CD4-positive, alpha-beta memory T cell (primary cell): ENCODE measurements at regions of chr2 and their contacts with region 1.

Region 1: DNA sequence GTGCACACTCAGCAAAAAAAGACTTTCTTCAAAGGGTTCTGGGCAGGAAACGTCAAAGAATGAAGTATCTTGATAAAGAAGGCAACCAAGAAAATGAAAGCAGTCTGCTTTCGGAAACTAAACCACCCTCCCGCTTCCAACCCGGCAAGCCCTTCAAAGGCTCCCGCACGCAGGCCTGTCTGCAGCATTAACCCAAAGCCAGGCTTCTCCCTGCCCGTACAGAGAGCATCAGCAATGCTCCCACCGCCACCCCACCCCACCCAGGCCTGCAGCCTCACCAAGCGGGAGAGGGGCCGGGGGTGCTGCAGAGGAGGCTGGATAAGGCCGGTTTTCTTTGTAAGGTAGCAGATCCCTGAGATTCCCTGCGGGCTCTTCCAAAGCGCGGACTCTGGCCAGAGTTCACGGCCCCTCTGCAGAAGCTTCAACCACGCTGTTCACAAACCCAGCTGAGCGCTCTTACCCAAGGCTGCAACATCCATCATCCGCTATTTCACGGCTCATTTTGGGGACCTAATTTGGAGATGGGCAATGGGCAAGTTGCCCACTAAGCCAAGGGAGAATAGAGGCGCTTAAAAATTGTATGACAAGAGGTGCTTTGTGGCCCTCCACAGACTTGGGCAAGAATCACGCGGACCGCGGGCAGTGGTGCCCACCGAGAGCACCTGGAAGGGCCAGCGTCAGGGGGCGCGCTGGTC is 225.6 kb upstream of the ID2 start:
- DNase-seq: peak; percentile 65 to 80 (median 74)
- H3K4me3 ChIP-seq: peak overlapping the region; percentile 12 to 45
- H3K4me3 Mint-ChIP-seq: peak overlapping the region; percentile 82 to 95 (median 88)
- H3K27ac ChIP-seq: peak overlapping the region; percentile 61
- H3K27ac Mint-ChIP-seq: peak overlapping the region; percentile 94 to 98 (median 96)
- H3K4me1 ChIP-seq: peaks cover 37% of the 10 kb centered on the region
- H3K4me1 Mint-ChIP-seq: peaks cover 21 to 47% (median 32%) of the 10 kb centered on the region in 4 donors
- H3K27me3 ChIP-seq: no peaks in the 10 kb centered on the region
- H3K27me3 Mint-ChIP-seq: no peaks in the 10 kb centered on the region

Region 2: GRCh38 chr2:8472545-8473323 is 16.4 kb after region 1 on chr2:
- CTCF ChIA-PET with region 1: interaction called, 3 read pairs
- POLR2A ChIA-PET with region 1: interaction called, 21 read pairs
- intact Hi-C with region 1: loop called (anchors 1 kb)
- DNase-seq: peak in 1 of 5 donors; percentile 20
- H3K4me3 ChIP-seq: no peak overlapping the region
- H3K4me3 Mint-ChIP-seq: peak overlapping the region in 7 of 8 donors; percentile 59 to 75 (median 70)
- H3K27ac ChIP-seq: peak overlapping the region; percentile 38
- H3K27ac Mint-ChIP-seq: peak overlapping the region; percentile 80 to 98 (median 91)
- H3K4me1 ChIP-seq: peaks cover 81% of the 10 kb centered on the region
- H3K4me1 Mint-ChIP-seq: peaks cover 53 to 89% (median 78%) of the 10 kb centered on the region in 4 donors
- H3K27me3 ChIP-seq: no peaks in the 10 kb centered on the region
- H3K27me3 Mint-ChIP-seq: no peaks in the 10 kb centered on the region

Region 3: DNA sequence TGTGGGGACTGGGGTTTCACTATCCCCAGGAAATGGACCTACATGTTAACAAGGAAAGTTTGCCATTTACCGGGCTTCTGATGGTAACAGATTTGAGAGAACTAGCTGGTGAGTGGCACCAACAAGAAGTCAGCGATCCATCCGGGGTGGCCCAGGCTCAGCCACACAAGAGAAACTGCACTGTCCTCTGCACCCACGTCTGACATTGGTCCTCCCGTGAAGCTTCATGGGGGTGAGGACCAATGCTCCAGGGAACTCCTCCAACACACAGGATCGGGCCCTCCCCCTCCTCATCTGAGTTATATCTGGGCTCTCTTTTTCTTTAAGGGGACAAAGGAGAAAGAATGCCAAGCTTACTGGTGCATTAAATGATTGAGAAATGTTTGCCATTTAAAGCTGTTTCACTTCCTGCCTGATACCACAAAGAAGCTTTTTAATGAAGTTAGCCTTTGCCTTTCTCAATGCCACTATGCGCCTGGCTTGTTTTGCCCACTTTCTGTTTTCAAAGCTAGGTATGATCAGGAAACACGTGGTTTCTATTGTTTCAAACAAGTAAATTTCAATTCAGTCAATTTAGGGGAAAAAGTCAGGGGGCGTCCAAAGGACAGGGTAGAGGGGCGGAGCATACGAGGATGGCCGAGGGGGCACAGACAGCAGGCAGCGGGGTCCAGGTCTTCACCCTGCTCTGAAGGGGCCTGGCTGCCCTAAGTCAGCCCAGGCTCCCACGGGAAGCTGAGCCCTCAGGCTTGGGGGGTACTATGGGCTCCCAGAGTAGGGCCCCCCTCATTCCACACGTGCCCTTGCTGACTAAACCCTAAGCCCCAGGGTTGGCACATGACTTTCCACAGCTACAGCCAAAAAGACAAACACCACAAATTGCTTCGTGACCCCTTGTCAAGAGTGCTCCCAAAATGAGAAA is 21.5 kb after region 1 on chr2:
- CTCF ChIA-PET with region 1: interaction called, 3 read pairs
- POLR2A ChIA-PET with region 1: interaction called, 21 read pairs
- intact Hi-C with region 1: loop called (anchors 1 kb)
- DNase-seq: peak; percentile 55 to 66 (median 60)
- H3K4me3 ChIP-seq: peak overlapping the region; percentile 27 to 41
- H3K4me3 Mint-ChIP-seq: peak overlapping the region; percentile 75 to 94 (median 82)
- H3K27ac ChIP-seq: peak overlapping the region; percentile 70
- H3K27ac Mint-ChIP-seq: peak overlapping the region; percentile 92 to 98 (median 96)
- H3K4me1 ChIP-seq: peaks cover 95% of the 10 kb centered on the region
- H3K4me1 Mint-ChIP-seq: peaks cover 66 to 100% (median 88%) of the 10 kb centered on the region in 4 donors
- H3K27me3 ChIP-seq: no peaks in the 10 kb centered on the region
- H3K27me3 Mint-ChIP-seq: no peaks in the 10 kb centered on the region